Activated CD4-positive, alpha-beta T cell treated with anti-CD3 and anti-CD28 coated beads for 36 hours (primary cell): ENCODE measurements at regions of chr6 and their contacts with region 1.

Region 1: DNA sequence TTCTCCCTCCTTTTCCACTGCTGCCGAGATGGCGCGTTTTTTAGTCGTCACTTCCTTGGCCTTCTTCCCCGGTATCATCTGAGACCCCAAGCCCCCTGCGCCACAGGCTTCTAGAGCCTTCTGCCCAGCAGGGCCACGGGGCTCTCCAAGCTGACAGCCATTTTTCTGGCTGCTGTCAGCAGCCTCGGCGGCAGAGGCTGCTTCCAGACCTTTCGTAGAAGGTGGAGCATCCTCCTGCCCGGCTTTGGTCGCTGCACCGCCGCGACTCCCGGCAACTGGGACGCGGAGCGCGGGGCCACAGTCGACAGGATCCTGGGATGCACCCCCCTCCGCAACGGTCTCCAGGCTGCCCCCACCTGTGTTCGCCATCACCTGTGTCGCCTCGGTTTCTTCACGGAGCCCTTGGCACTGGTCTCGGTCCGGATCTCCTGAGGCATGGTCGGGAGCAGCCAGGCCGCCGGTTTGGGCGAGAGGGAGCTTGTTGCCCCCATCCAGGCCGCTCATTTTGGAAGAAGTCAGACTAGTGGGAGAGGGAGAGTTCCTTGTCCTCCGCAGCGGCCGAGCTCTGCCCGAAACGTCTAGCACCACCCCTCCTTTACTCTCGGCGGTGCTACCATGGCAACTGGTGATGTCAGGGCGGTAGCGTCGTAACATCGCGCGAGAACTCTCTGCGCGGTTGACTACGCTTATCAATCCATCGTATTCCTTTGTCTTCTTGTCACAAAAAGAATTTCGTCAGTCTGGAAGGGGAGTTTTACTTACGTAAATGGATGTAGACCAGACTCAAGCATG is at the start of gene TSPYL4:
- DNase-seq: peak; percentile 95
- ATAC-seq: peak; percentile 99
- H3K4me3 Mint-ChIP-seq: no peak within 1 kb of the TSS
- H3K27ac Mint-ChIP-seq: no peak within 1 kb of the TSS
- H3K4me1 Mint-ChIP-seq: peaks cover 19% of the 10 kb centered on the region
- H3K27me3 Mint-ChIP-seq: no peaks in the 10 kb centered on the region
- total RNA-seq, gene TSPYL4: 9.4 to 10.8 TPM

Region 2: DNA sequence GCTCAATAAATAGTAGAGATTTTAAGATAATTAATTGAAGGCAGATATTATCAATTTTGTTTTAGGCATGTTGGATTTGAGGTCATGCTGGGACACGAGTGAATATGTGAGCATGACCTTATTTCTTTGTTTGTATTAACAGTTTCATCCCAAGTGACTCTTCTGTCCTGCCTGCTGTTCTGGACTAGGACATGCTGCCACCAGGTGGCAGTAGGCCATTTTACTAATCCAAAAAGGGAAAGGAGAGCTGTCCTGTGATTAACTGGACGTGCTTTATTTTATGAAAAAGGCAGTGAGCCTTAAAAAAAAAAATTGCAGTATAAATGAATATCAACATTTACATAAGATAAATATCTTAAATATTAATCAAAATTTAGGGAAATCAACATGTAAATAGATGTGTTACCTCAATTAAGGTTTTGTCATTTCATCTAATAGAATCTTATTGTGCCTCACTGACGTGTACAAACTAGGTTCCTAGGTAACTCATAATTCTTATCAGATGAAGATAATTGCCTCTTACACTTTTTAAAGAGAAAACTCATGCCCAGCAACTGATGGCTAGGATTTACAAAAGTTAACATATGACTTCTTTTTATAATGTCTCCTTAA is 242.8 kb before region 1 on chr6:
- CTCF ChIA-PET with region 1: no interaction called
- POLR2A ChIA-PET with region 1: no interaction called
- intact Hi-C with region 1: loop called in 1 of 2 experiments (anchors 5 kb)
- DNase-seq: peak; percentile 71
- ATAC-seq: no peak
- H3K4me3 Mint-ChIP-seq: no peak overlapping the region
- H3K27ac Mint-ChIP-seq: no peak overlapping the region
- H3K4me1 Mint-ChIP-seq: peaks cover 12% of the 10 kb centered on the region
- H3K27me3 Mint-ChIP-seq: peaks cover 19% of the 10 kb centered on the region

Region 3: DNA sequence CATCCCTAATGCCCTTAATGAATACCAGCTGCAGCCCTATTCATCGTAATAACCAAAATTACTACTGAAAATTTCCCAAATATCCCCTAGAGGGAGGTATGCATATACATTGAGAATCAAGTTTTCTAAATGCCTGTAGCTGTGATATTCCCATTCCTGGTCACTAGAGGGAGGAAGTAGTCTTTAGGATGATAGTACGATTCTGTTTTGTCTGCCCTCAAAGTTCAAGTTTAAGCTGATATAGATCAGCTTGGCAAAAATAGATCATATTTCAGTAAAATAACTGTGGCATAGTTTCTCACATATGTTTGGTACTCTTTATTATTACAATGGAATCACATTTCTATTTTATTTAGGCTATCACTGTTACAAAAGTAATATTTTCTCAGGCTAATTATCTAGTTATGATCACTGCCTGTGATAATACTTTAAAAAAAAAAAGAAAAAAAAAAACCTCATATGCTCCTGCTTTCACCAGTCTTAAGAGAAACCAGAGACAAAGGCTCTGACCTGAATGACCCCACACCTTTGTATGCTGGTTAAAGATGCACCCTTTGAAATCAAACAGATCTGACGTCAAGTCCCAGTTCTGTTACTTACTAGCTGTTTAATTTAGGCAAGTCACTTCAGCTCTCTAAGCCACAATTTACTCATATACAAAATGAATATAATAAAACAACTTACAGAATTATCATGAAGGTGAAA is 15.0 kb after region 1 on chr6:
- CTCF ChIA-PET with region 1: interaction called, 15 read pairs
- POLR2A ChIA-PET with region 1: interaction called, 4 read pairs
- intact Hi-C with region 1: loop called in 1 of 2 experiments (anchors 1 kb)
- DNase-seq: no peak
- ATAC-seq: peak; percentile 72
- H3K4me3 Mint-ChIP-seq: no peak overlapping the region
- H3K27ac Mint-ChIP-seq: no peak overlapping the region
- H3K4me1 Mint-ChIP-seq: peaks cover 28% of the 10 kb centered on the region
- H3K27me3 Mint-ChIP-seq: no peaks in the 10 kb centered on the region